IMR-90 (cell line): ENCODE measurements at regions of chr1 and their contacts with region 1.

Region 1: DNA sequence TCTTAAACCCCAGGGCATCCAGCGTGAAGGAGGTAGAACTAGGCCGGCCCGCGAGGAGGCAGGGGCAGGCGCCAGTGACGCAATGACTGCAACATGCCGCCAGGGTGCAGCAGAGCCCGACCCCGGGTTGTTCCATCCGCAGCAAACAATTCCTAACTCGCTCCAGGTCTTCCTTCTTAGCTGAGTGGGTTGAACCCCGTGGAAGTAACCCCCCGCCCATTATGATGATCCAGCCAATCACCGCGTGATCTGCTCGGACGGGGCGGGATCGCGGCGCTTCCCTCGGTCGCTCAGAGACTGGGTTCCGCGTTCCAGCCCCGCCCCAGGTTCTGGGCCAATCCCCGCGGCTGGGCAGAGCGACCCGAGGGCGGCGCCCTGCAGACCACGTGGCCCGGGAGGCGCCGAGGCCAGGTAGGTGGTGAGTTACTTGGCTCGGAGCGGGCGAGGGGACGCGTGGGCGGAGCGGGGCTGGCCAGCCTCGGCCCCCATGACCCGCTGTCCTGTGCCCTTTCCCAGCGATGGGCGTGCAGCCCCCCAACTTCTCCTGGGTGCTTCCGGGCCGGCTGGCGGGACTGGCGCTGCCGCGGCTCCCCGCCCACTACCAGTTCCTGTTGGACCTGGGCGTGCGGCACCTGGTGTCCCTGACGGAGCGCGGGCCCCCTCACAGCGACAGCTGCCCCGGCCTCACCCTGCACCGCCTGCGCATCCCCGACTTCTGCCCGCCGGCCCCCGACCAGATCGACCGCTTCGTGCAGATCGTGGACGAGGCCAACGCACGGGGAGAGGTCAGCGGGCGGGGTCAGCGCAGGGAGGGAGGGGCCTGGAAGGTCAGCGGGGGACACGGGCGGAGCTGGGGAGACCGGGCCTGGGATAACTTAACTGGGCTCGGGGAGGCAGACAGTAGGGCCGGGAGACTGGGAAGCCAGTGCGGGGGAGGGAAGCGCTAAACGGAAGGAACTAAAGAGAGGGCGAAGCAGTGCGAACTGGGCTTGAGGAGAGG is at the start of gene DUSP23:
- DNase-seq: peak; percentile 96
- ATAC-seq: peak; percentile 99
- H3K4me3 ChIP-seq: peak within 1 kb of the TSS; percentile 60
- H3K27ac ChIP-seq: no peak within 1 kb of the TSS
- H3K4me1 ChIP-seq: no peaks in the 10 kb centered on the region
- H3K27me3 ChIP-seq: no peaks in the 10 kb centered on the region
- CTCF ChIP-seq: peak; percentile 96
- POLR2A ChIP-seq: no peak
- RAD21 ChIP-seq: peak; percentile 80
- total RNA-seq, gene DUSP23: 4.1 and 4.2 TPM in 2 replicates

Region 2: GRCh38 chr1:159161001-159161718 is 619.7 kb before region 1 on chr1:
- CTCF ChIA-PET with region 1: no interaction called
- POLR2A ChIA-PET with region 1: no interaction called
- dilution Hi-C with region 1: no loop called
- in situ Hi-C with region 1: no loop called
- intact Hi-C with region 1: loop called (anchors 1 kb)
- DNase-seq: peak; percentile 86
- ATAC-seq: peak; percentile 100
- H3K4me3 ChIP-seq: no peak overlapping the region
- H3K27ac ChIP-seq: no peak overlapping the region
- H3K4me1 ChIP-seq: peaks cover 2% of the 10 kb centered on the region; the same call in 1 of the 2 replicates
- H3K27me3 ChIP-seq: no peaks in the 10 kb centered on the region
- CTCF ChIP-seq: peak; percentile 100
- POLR2A ChIP-seq: no peak
- RAD21 ChIP-seq: peak; percentile 95

Region 3: DNA sequence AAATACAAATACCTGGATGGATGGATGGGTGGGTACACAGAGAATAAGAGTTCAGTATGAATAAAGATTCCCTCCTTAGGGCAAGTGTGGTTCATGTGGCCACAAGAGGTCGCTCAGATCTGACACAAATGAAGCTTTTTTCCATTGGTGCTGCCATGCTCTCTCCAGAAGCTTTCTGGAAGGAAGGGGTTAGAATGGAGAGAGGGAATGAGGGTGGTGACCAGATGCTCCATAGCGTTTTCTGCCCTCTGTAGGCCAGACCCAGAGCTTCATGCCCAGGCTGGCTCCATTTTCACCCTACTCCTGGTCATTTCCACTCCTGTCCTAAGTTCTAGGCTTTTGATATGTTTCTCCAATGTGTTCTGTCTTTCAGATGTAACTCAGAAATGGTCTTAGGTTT is 18.0 kb after region 1 on chr1:
- CTCF ChIA-PET with region 1: interaction called, 5 read pairs
- POLR2A ChIA-PET with region 1: no interaction called
- dilution Hi-C with region 1: no loop called
- in situ Hi-C with region 1: no loop called
- intact Hi-C with region 1: loop called (anchors 2 kb)
- DNase-seq: peak; percentile 85
- ATAC-seq: peak; percentile 99
- H3K4me3 ChIP-seq: no peak overlapping the region
- H3K27ac ChIP-seq: no peak overlapping the region
- H3K4me1 ChIP-seq: no peaks in the 10 kb centered on the region
- H3K27me3 ChIP-seq: peaks cover 38% of the 10 kb centered on the region
- CTCF ChIP-seq: peak; percentile 82
- POLR2A ChIP-seq: no peak
- RAD21 ChIP-seq: peak; percentile 91

Region 4: GRCh38 chr1:159821171-159821867 is 40.4 kb after region 1 on chr1:
- CTCF ChIA-PET with region 1: no interaction called
- POLR2A ChIA-PET with region 1: no interaction called
- dilution Hi-C with region 1: no loop called
- in situ Hi-C with region 1: no loop called
- intact Hi-C with region 1: loop called (anchors 5 kb)
- DNase-seq: peak; percentile 47
- ATAC-seq: peak; percentile 96
- H3K4me3 ChIP-seq: no peak overlapping the region
- H3K27ac ChIP-seq: no peak overlapping the region
- H3K4me1 ChIP-seq: no peaks in the 10 kb centered on the region
- H3K27me3 ChIP-seq: peaks cover 31% of the 10 kb centered on the region
- CTCF ChIP-seq: peak; percentile 61
- POLR2A ChIP-seq: no peak
- RAD21 ChIP-seq: peak; percentile 46

Region 5: DNA sequence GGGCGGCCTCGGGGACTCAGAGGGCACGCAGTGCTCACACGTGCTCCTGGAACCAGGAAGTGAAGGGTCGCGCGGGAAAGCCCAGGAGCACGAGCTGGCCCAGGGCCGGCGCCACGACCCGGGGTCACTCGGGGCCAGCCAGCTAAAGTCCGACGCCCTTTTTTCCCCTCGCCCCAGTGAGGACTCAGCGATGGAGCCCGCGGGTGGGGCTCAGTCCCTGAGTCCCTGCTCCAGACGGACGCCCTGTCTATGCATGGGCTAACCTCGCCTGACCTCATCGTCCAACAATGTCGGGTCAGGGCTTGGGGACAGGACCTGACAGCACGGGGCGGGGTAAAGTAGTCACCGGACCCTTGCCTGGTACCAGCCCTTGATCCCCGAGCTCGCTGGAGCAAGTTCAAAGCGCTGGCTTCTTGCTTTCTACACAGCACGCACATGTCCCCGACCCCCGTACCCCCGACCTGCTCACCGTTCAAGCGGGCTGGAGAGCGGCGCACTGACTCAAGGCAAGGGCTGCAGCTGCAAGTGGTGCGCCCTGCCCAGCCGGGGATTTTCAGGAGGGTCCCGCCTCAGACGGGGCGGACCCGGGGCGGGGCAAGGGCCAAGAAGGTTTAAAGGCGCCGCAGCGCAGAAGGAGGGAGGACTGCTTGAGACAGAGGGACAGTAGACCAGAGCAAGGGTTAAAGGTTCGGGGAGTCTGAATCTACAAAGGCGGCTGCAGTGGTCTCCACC is 144.3 kb after region 1 on chr1 and contains the start of gene TAGLN2:
- CTCF ChIA-PET with region 1: no interaction called
- POLR2A ChIA-PET with region 1: no interaction called
- dilution Hi-C with region 1: no loop called
- in situ Hi-C with region 1: no loop called
- intact Hi-C with region 1: loop called (anchors 1 kb)
- DNase-seq: peak; percentile 90
- ATAC-seq: peak; percentile 82
- H3K4me3 ChIP-seq: peak within 1 kb of the TSS; percentile 83
- H3K27ac ChIP-seq: peak within 1 kb of the TSS; percentile 90
- H3K4me1 ChIP-seq: peaks cover 15% of the 10 kb centered on the region
- H3K27me3 ChIP-seq: no peaks in the 10 kb centered on the region
- CTCF ChIP-seq: no peak
- POLR2A ChIP-seq: peak; percentile 97
- RAD21 ChIP-seq: no peak
- total RNA-seq, gene TAGLN2: 365 and 440 TPM in 2 replicates

Region 6: DNA sequence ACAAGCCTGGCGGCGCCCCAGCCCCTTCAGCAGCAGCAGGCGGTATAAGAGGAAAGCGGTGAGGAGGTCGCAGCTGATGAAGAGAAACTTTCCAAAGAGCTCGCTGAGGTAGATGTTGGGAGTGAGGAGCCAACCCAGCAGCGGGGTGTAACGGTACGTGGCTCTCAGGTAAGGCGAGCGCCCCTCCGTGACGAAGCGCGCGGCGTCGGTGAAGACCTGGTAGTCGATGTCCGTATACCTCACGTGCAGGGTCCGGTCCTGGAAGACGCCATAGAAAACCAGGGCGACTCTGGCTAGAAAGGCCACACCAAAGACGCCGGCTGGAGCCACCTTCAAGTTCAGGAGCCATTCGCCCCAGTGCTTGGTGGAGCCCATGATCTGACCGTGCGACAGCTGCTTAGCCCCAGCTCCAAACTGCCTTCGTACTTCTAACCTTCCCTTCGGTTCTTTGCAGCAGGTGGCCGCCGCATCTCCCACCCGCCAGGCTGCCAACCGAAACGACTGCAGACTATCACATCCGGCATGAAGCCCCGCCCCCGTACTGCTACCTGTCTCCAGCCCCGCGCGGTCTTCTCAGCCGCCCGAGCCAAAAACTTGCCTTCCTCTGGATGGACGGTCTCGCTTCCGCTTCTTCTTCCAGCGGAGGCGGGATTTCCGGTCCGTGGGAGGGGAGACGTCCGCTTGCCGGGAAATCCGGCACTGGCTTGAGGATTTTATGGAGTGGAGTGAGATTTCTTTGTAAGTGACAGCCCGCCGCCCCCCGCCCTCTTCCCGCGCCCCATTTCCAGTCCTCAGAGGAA is 250.7 kb after region 1 on chr1 and contains the start of gene PIGM:
- CTCF ChIA-PET with region 1: no interaction called
- POLR2A ChIA-PET with region 1: no interaction called
- dilution Hi-C with region 1: no loop called
- in situ Hi-C with region 1: loop called (anchors 10 kb)
- intact Hi-C with region 1: loop called (anchors 2 kb)
- DNase-seq: peak; percentile 85
- ATAC-seq: peak; percentile 95
- H3K4me3 ChIP-seq: peak within 1 kb of the TSS; percentile 91
- H3K27ac ChIP-seq: peak within 1 kb of the TSS; percentile 55
- H3K4me1 ChIP-seq: peaks cover 6% of the 10 kb centered on the region
- H3K27me3 ChIP-seq: no peaks in the 10 kb centered on the region; the same call in 1 of the 2 replicates
- CTCF ChIP-seq: no peak
- POLR2A ChIP-seq: no peak
- RAD21 ChIP-seq: no peak
- total RNA-seq, gene PIGM: 2.9 and 4.4 TPM in 2 replicates